Right ventricle myocardium superior (tissue), 1 donor: ENCODE measurements at regions of chr1 and their contacts with region 1.

Region 1: DNA sequence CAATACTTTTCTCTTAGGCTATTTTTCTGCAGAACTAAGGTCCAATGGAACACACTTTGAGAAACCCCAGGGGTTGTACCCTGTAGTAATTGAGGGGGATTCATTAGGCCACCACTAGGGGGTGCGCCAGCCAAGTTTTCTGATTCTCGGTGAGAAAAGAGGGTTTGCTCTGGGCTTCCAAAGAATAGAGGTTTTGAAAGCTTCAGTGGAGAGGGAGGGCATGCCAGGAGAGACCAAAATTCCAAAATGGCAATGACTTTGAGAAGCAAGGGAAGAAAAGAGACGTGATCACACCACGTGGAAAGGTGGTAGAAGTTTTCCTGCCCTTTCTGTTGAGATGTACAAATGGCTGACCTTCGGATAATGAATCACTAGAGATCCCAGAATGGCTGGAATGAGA is 323.3 kb downstream of the RPS6KC1 start:
- DNase-seq: peak; percentile 47
- ATAC-seq: peak; percentile 84

Region 2: GRCh38 chr1:213987927-213988506 is 613.6 kb after region 1 on chr1 and contains the start of gene PROX1:
- intact Hi-C with region 1: loop called (anchors 10 kb)
- DNase-seq: no peak
- ATAC-seq: peak; percentile 82
- total RNA-seq, gene PROX1: 85.2 TPM